ENCODE measurements at regions of chr13 and their contacts with region 1.

Region 1: DNA sequence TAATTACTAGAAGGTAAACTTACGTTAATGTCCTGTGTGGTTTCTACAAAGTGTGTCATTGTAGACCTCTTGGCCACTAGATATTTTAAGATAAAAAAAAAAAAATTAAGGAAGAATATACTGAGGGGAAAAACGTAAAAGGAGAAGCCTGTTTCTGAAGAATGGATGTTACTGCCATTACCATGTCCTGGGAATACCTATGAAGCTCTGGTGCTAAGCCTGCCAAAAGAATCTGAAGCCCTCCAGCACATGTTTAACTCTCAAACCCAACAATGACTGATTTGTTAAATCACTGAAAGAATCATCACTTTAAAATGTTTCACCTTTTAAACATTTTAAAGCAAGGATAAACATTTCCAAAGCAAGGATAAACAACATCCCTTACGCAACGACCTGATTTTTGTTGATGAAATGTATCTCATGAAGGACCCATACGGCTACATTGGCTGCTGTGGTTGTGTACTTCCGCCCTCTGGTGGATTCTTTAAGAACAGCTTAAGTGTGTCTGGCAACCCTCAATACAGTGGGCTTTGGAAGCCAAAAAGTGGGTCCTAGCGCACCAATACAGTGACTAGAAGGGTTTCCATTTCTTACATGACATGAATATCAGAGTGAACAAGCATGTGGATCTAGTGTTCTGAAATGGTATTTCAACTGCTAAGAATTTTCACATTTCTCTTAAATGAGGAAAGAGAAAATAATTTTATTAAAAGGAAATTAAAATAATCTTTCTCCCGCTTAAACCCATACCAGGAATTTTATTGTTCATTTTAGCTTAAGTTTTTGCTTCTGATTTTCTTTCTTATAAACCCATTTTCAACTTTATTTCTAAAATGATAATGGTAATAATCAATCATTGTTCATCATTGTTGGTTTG is 74.5 kb upstream of the RAP2A start:
- DNase-seq: peak in 3 of 10 donors; percentile 49 to 71 (median 62)
- H3K4me3 ChIP-seq: peak overlapping the region in 3 of 59 donors; percentile 5 to 29 (median 16)
- H3K27ac ChIP-seq: peak overlapping the region in 55 of 59 donors; percentile 26 to 87 (median 73)
- H3K27me3 ChIP-seq: no peaks in the 10 kb centered on the region
- CTCF ChIP-seq: peak; percentile 77 to 97 (median 90)

Region 2: DNA sequence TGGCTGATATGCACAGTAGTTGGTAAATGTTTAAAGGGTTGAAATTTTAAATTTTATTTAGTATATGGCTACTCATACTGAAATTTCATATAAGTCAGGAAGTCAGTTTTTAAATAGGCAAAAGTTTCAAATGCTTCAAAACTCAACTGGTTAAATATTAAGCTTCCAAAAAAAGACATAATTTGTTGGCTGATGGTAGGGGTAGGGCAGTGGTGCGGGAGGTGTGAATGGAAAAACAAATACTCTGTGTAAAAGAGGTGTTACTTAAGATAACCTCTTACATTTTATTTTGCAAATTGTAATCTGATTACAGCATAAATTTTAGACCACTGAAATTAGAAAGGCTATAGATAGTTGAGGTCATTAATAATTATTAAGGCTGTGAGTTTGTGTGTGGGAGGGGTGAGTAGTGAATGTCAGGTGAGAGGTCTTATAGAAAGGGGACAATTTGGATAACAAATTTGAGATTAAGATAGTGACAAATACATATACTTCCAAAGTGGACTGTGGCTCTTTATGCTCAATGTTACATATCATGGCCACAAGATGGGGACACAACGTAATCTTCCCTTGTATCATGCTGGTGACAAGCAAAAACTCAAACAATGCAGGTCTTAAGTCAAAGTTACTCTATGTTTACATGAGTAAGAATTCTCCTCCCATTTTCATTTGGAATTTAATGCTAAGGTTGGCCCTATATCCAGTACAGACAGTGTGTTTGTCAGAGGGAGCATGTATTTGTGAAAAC is 328.5 kb before region 1 on chr13:
- intact Hi-C with region 1: loop called in 1 of 2 experiments (anchors 5 kb)
- DNase-seq: no peak
- H3K4me3 ChIP-seq: no peak overlapping the region
- H3K27ac ChIP-seq: no peak overlapping the region
- H3K27me3 ChIP-seq: no peaks in the 10 kb centered on the region
- CTCF ChIP-seq: peak in 50 of 56 donors; percentile 15 to 62 (median 38)

Region 3: GRCh38 chr13:97109841-97110492 is 249.5 kb before region 1 on chr13:
- intact Hi-C with region 1: loop called (anchors 5 kb)
- DNase-seq: peak; percentile 85 to 95 (median 88)
- H3K4me3 ChIP-seq: peak overlapping the region in 58 of 59 donors; percentile 11 to 69 (median 50)
- H3K27ac ChIP-seq: peak overlapping the region in 58 of 59 donors; percentile 8 to 89 (median 75)
- H3K27me3 ChIP-seq: no peaks in the 10 kb centered on the region
- CTCF ChIP-seq: peak; percentile 95 to 100 (median 99)

Region 4: GRCh38 chr13:97221989-97222700 is 137.3 kb before region 1 on chr13 and contains the start of gene MBNL2:
- intact Hi-C with region 1: loop called (anchors 5 kb)
- DNase-seq: peak; percentile 91 to 99 (median 98)
- H3K4me3 ChIP-seq: peak within 1 kb of the TSS; percentile 54 to 96 (median 79)
- H3K27ac ChIP-seq: peak within 1 kb of the TSS; percentile 52 to 97 (median 92)
- H3K27me3 ChIP-seq: no peaks in the 10 kb centered on the region
- CTCF ChIP-seq: peak in 18 of 56 donors; percentile 3 to 38 (median 10)
- total RNA-seq, gene MBNL2: 96.2 to 275 (median 181) TPM

Region 5: GRCh38 chr13:97242755-97243497 is 116.5 kb before region 1 on chr13:
- intact Hi-C with region 1: loop called in 1 of 2 experiments (anchors 5 kb)
- DNase-seq: peak in 9 of 10 donors; percentile 78 to 89 (median 84)
- H3K4me3 ChIP-seq: peak overlapping the region in 50 of 59 donors; percentile 0 to 59 (median 31)
- H3K27ac ChIP-seq: peak overlapping the region; percentile 42 to 99 (median 94)
- H3K27me3 ChIP-seq: no peaks in the 10 kb centered on the region
- CTCF ChIP-seq: peak in 11 of 56 donors; percentile 6 to 25 (median 11)

Region 6: GRCh38 chr13:97659602-97660001 is 300.2 kb after region 1 on chr13:
- intact Hi-C with region 1: loop called in 1 of 2 experiments (anchors 10 kb)
- DNase-seq: peak in 8 of 10 donors; percentile 9 to 55 (median 44)
- H3K4me3 ChIP-seq: no peak overlapping the region
- H3K27ac ChIP-seq: no peak overlapping the region
- H3K27me3 ChIP-seq: no peaks in the 10 kb centered on the region
- CTCF ChIP-seq: peak in 54 of 56 donors; percentile 25 to 77 (median 54)

Region 7: DNA sequence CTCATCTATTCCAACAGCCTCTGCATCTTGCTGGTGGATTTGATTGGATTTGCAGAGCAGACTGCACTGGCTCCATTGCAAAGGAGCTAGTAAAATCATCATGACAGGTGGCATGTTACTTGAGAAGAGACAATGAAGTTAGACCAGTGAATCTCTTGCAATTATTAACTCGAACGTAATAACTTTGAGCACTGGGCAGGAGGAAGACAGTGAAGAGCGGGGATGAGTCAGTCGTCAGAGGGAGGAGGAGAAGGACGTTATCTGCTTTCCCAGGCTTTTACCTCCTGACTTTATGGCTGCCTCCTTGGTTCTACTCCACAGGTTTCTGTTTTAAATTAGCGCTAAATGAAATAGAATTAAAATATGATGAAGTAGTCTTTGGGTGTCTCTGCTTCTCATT is 336.3 kb after region 1 on chr13:
- intact Hi-C with region 1: no loop called
- DNase-seq: no peak
- H3K4me3 ChIP-seq: no peak overlapping the region
- H3K27ac ChIP-seq: no peak overlapping the region
- H3K27me3 ChIP-seq: peaks cover 0 to 3% (median 0%) of the 10 kb centered on the region in 45 donors
- CTCF ChIP-seq: no peak

Region 8: GRCh38 chr13:97809576-97809975 is 450.2 kb after region 1 on chr13:
- intact Hi-C with region 1: loop called in 1 of 2 experiments (anchors 10 kb)
- DNase-seq: no peak
- H3K4me3 ChIP-seq: no peak overlapping the region
- H3K27ac ChIP-seq: peak overlapping the region in 7 of 59 donors; percentile 2 to 61 (median 21)
- H3K27me3 ChIP-seq: no peaks in the 10 kb centered on the region
- CTCF ChIP-seq: no peak

Measured in dorsolateral prefrontal cortex (tissue), 120 donors.